Heart right ventricle (tissue), 16 donors: ENCODE measurements at regions of chr2 and their contacts with region 1.

Region 1: GRCh38 chr2:237966565-237967462 is at the start of gene UBE2F:
- DNase-seq: peak; percentile 97 to 98
- ATAC-seq: peak; percentile 97 to 99 (median 98)
- H3K4me3 ChIP-seq: peak within 1 kb of the TSS; percentile 60 to 87 (median 74)
- H3K27ac ChIP-seq: peak within 1 kb of the TSS in 9 of 10 donors; percentile 67 to 87 (median 75)
- H3K4me1 ChIP-seq: peaks cover 15 to 50% (median 31%) of the 10 kb centered on the region in 9 donors
- H3K27me3 ChIP-seq: no peaks in the 10 kb centered on the region
- CTCF ChIP-seq: no peak
- total RNA-seq, gene UBE2F: 53.6 to 82.2 (median 63.7) TPM

Region 2: DNA sequence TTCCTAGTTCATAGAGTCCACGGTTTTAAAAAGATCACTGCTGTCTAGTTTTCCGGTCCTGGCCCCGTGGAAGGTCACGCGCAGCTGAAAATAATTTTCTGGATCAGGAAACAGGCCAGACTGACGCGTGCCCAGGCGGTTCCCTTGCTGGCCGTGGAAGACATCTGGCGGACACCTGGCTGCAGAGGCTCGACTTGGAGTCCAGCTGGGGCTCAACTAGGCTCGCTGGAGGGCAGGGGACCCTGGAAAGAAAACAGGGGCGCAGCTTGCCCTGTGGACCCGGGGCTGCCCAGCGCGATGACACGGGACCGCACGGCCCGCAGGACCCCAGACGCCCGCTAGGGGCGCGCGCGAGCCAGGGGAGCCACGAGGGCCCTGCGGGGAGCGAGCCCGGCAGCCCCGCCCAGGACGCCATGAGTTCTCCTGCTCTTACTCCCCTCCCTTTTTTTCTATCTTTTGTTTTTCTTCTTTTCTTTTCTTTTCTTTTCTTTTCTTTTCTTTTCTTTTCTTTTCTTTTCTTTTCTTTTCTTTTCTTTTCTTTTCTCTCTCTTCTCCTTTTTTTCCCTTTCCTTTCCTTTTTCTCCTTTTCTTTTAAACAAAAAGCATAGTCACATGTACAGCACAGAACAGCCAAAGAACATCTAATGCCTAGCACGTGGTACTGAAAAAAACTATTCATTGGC is 43.2 kb before region 1 on chr2:
- intact Hi-C with region 1: loop called in 1 of 10 experiments (anchors 5 kb)
- DNase-seq: peak; percentile 67 to 84
- ATAC-seq: peak; percentile 87 to 94 (median 92)
- H3K4me3 ChIP-seq: peak overlapping the region in 7 of 10 donors; percentile 28 to 47 (median 40)
- H3K27ac ChIP-seq: peak overlapping the region in 8 of 10 donors; percentile 12 to 58 (median 38)
- H3K4me1 ChIP-seq: peaks cover 0 to 18% (median 8%) of the 10 kb centered on the region in 9 donors
- H3K27me3 ChIP-seq: no peaks in the 10 kb centered on the region
- CTCF ChIP-seq: peak; percentile 95 to 99 (median 98)

Region 3: DNA sequence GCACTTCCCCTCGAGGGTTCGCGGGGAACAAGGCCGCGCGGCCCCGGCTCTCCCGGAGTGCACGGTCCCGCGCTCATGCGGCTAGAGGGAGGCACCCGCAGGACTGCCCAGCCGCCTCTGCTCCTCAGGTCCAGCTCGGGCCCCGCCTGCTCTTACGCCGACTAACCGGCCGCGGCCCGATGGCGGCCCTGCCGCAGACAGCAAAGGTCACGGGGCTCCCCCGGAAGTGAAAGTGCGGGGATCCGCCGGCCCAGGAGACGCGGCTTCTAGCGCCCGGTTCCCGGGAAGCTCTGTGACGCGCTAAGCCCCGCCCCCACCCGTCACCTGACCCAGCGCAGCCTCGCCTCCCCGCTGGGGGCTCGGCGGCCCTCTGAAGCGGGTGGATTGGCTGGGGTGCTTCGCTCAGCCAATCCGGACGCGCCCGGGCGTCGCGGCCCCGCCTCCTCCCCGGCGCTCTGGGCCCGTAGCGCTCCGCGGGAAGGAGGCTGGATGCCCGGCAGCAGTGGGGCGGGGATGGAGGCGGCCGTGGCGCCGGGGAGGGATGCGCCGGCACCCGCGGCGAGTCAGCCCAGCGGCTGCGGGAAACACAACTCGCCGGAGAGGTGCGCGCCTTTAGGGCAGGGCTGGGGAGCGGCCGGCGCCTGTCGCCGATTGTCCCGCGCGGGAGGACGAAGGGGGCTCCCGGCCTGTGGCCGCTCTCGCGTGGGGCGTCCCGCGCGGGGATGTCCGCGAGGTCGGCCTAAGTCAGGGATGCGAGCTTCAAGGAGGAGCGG is 93.9 kb after region 1 on chr2 and contains the start of gene SCLY:
- intact Hi-C with region 1: loop called in 3 of 10 experiments (anchors 5 kb)
- DNase-seq: peak; percentile 97 to 98
- ATAC-seq: peak; percentile 99 to 100 (median 100)
- H3K4me3 ChIP-seq: peak within 1 kb of the TSS; percentile 70 to 95 (median 81)
- H3K27ac ChIP-seq: peak within 1 kb of the TSS; percentile 69 to 96 (median 88)
- H3K4me1 ChIP-seq: peaks cover 2 to 25% (median 17%) of the 10 kb centered on the region in 9 donors
- H3K27me3 ChIP-seq: no peaks in the 10 kb centered on the region
- CTCF ChIP-seq: no peak
- total RNA-seq, gene SCLY: 8.3 to 14.5 (median 11.4) TPM

Region 4: DNA sequence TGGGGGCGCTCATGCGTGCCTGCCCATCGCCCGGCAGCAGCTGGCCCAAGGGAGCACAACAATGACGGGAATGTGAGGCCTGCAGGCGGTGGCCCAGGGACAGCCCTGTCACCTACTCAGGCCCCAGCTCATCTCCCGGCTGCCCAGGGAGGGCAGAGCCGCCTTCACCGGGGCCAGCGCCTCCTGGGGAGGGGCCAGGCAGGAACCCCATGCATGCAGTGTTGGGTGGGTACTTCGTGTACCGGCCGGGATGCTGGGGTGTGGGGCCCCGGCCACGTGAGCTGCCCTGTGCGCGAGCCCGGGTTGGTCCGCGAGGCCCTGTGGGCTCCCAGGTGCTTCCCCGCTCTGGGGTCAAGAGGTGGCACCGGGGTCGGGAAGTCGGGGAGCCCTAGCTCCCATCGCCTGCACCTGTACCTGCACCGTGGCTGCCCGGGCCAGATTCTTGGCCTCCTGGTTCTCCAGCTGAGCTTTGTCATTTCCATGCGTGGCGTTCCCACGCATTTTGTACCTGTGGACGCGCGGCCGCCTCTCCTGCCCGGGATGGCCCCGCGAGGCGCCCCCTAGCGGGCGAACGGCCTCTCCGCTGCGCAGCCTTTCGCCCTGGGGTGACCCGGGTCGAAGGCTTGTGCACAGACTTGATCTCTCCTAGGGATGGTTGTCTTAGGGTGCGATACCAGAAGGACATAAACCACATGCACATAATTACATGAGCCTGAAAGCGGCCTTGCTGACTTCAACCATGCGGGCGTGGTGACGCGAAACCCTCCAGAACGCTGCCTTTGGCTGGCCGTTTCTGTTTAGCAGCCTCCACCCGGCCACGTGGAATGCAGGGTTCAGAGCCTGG is 172.6 kb after region 1 on chr2:
- intact Hi-C with region 1: loop called in 1 of 10 experiments (anchors 5 kb)
- DNase-seq: no peak
- ATAC-seq: peak; percentile 25 to 68 (median 50)
- H3K4me3 ChIP-seq: peak overlapping the region; percentile 5 to 54 (median 40)
- H3K27ac ChIP-seq: peak overlapping the region; percentile 69 to 96 (median 89)
- H3K4me1 ChIP-seq: peaks cover 6 to 71% (median 51%) of the 10 kb centered on the region in 9 donors
- H3K27me3 ChIP-seq: peaks cover 0 to 2% (median 0%) of the 10 kb centered on the region in 7 donors
- CTCF ChIP-seq: peak; percentile 33 to 74 (median 64)